Colonic mucosa (tissue), 4 donors: ENCODE measurements at regions of chr16 and their contacts with region 1.

Region 1: DNA sequence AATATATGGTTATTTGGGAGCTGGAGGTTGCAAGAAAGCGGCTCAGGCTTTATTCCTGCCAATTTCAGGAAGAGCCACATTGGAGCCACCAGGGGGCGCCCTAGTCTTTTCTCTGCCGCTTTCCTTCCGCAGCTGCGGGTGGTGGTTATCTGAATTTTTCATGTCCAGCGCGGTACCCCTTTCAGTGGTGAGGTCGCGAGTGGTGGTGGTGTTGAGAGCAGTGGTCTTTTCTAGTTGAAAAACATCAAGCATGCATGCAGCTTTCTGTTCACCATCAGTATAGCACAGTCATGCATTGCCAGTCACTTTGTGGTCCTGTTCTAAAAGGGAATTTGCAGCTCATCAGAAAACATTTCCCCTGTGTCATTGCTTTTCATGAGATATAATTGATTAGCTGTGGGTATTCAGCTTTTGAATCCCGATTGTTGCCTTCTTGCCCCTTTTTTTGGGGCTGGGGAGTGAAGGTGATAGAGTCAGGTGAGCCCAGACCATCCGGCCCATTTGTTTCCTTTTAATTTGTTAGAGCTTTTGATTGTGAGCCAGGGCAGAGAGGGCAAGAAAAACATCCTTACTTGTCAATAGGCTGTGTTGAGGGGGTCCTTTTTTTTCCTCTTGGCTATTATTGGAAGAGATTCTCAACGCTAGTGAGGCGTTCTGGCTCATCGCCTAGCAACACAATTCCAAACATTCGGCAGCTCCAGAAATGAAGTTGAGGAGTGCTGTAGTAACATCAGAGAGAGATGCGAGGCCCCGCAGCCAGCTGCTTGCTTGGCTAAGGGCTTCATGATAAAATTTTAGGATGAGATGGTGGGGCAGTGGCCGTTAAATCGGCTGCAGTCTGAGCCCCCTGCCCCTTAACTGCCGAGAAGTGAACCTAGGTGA is 119.0 kb downstream of the SNX29 start:
- DNase-seq: peak; percentile 66
- H3K4me3 ChIP-seq: no peak overlapping the region
- H3K27ac ChIP-seq: no peak overlapping the region
- H3K4me1 ChIP-seq: no peaks in the 10 kb centered on the region
- H3K27me3 ChIP-seq: no peaks in the 10 kb centered on the region
- CTCF ChIP-seq: peak; percentile 88

Region 2: GRCh38 chr16:12257926-12258561 is 162.5 kb after region 1 on chr16:
- intact Hi-C with region 1: loop called (anchors 5 kb)
- DNase-seq: peak; percentile 71
- H3K4me3 ChIP-seq: no peak overlapping the region
- H3K27ac ChIP-seq: no peak overlapping the region
- H3K4me1 ChIP-seq: no peaks in the 10 kb centered on the region
- H3K27me3 ChIP-seq: no peaks in the 10 kb centered on the region
- CTCF ChIP-seq: no peak

Region 3: GRCh38 chr16:12340151-12340733 is 244.7 kb after region 1 on chr16:
- intact Hi-C with region 1: loop called (anchors 10 kb)
- DNase-seq: peak; percentile 51
- H3K4me3 ChIP-seq: no peak overlapping the region
- H3K27ac ChIP-seq: no peak overlapping the region
- H3K4me1 ChIP-seq: no peaks in the 10 kb centered on the region
- H3K27me3 ChIP-seq: no peaks in the 10 kb centered on the region
- CTCF ChIP-seq: peak; percentile 36

Region 4: GRCh38 chr16:12819126-12820117 is 723.9 kb after region 1 on chr16:
- intact Hi-C with region 1: loop called (anchors 10 kb)
- DNase-seq: peak; percentile 71
- H3K4me3 ChIP-seq: no peak overlapping the region
- H3K27ac ChIP-seq: no peak overlapping the region
- H3K4me1 ChIP-seq: no peaks in the 10 kb centered on the region
- H3K27me3 ChIP-seq: no peaks in the 10 kb centered on the region
- CTCF ChIP-seq: peak; percentile 84